ENCODE measurements at regions of chrX and their contacts with region 1.

Region 1: GRCh38 chrX:155997436-155997835 is at the start of gene IL9R:
- DNase-seq: peak; percentile 88
- H3K4me3 Mint-ChIP-seq: peak within 1 kb of the TSS; percentile 82
- H3K27ac Mint-ChIP-seq: peak within 1 kb of the TSS; percentile 91
- H3K4me1 Mint-ChIP-seq: peaks cover 51% of the 10 kb centered on the region
- H3K27me3 Mint-ChIP-seq: no peaks in the 10 kb centered on the region
- total RNA-seq, gene IL9R: 8.5 and 8.7 TPM in 2 replicates

Region 2: DNA sequence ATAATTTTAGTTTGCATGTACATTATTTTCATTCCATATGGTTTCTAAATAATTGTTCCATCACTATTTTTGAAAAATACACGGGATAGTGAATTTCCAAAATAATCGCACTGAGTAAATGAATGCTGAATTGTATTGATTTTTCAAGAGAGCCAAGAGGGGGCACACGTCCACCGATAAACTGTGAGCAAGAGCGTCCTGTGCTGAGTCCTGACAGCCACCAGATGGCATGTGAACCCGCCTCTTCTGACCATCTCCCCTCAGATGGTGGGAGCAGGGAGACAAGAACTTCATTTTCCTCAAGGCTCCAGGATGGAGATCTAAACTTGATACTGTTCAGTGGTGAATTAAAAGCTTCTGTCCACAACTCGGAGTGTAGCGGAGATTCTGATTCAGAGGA is 30.6 kb before region 1 on chrX:
- intact Hi-C with region 1: loop called (anchors 2 kb)
- DNase-seq: peak; percentile 81
- H3K4me3 Mint-ChIP-seq: no peak overlapping the region
- H3K27ac Mint-ChIP-seq: no peak overlapping the region
- H3K4me1 Mint-ChIP-seq: peaks cover 20% of the 10 kb centered on the region
- H3K27me3 Mint-ChIP-seq: peaks cover 9% of the 10 kb centered on the region